ENCODE measurements at regions of chr19 and their contacts with region 1.

Region 1: DNA sequence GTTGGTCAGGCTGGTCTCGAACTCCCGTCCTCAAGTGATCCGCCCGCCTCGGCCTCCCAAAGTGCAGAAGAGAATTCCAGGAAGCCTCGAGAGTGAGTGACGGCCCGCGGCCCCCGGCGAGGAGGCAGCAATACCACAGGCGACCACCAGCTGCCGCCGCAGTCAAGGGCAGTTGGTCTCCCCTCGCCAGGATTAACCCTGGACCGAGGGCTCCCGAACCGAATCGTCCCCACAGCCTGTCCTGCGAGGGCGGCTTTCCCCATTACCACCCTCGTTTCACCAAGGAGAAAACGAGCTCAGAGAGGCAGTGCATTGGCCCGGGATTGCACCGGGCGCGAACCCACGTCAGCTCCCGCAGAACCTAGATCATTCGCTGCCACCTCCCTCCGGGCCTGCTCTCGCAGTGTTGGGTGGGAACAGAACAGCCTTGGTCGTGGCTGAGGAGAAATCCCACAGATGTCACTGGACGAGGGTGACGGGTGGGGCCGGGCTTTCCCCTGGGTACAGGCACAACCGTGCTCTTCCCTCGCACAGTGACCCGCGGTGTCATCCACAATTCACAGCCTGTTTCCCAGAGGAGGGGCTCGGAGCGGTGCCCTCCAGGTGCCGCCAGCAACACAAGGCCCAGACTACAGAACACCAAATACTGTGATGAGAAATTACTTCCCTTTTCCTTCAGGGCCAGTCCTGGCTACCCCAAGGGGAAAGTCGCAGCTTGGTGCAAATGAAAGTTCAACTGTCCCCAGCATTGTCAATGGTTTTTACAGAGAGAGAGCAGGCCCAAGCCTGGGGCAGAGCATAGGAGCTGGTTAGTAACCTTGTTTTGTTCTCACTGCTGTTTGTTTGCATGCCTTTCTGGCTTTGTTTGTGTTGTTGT is 24.8 kb downstream of the C2CD4C start:
- DNase-seq: no peak
- ATAC-seq: peak; percentile 77
- H3K4me3 ChIP-seq: no peak overlapping the region
- H3K27ac ChIP-seq: no peak overlapping the region
- H3K4me1 ChIP-seq: no peaks in the 10 kb centered on the region
- H3K27me3 ChIP-seq: no peaks in the 10 kb centered on the region
- CTCF ChIP-seq: peak; percentile 71

Region 2: DNA sequence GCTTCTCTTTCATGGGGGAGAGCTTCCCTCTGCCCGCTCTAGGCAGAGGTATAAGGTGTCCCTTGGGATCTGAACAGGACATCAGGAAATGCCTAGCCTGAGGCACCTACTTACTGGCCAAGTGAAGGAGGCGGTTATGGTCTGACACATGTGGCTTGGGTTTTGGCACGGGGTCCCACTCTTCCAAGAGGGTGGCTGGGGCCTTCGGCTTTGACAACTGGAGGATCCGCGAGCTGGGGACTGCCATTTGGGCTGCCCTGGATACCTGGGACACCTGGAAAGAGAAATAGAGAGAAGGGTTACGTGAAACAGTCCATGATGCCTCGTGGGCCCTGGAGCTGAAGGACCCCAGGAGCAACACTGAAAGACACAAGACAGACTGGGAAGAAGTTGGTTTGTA is 17.2 kb before region 1 on chr19:
- CTCF ChIA-PET with region 1: interaction called, 11 read pairs
- POLR2A ChIA-PET with region 1: no interaction called
- in situ Hi-C with region 1: no loop called
- intact Hi-C with region 1: no loop called
- DNase-seq: no peak
- ATAC-seq: no peak
- H3K4me3 ChIP-seq: no peak overlapping the region
- H3K27ac ChIP-seq: no peak overlapping the region
- H3K4me1 ChIP-seq: no peaks in the 10 kb centered on the region
- H3K27me3 ChIP-seq: no peaks in the 10 kb centered on the region
- CTCF ChIP-seq: no peak